B cell (primary cell): ENCODE measurements at regions of chr11 and their contacts with region 1.

Region 1: GRCh38 chr11:67439321-67439883 is 1.9 kb upstream of the PTPRCAP start:
- DNase-seq: peak; percentile 50
- ATAC-seq: no peak
- H3K4me3 ChIP-seq: peak overlapping the region in 2 of 5 experiments; percentile 92 to 96
- H3K4me3 Mint-ChIP-seq: peak overlapping the region; percentile 88
- H3K27ac ChIP-seq: peak overlapping the region; percentile 22 to 88
- H3K27ac Mint-ChIP-seq: peak overlapping the region; percentile 92
- H3K4me1 ChIP-seq: peaks cover 68 to 85% of the 10 kb centered on the region in 2 donors
- H3K4me1 Mint-ChIP-seq: peaks cover 82% of the 10 kb centered on the region
- H3K27me3 ChIP-seq: no peaks in the 10 kb centered on the region
- H3K27me3 Mint-ChIP-seq: no peaks in the 10 kb centered on the region
- CTCF ChIP-seq: no peak

Region 2: GRCh38 chr11:67053896-67054842 is 385.2 kb before region 1 on chr11:
- CTCF ChIA-PET with region 1: no interaction called
- POLR2A ChIA-PET with region 1: no interaction called
- intact Hi-C with region 1: no loop called
- DNase-seq: peak; percentile 55
- ATAC-seq: no peak
- H3K4me3 ChIP-seq: no peak overlapping the region
- H3K4me3 Mint-ChIP-seq: no peak overlapping the region
- H3K27ac ChIP-seq: no peak overlapping the region
- H3K27ac Mint-ChIP-seq: no peak overlapping the region
- H3K4me1 ChIP-seq: peaks cover 9% of the 10 kb centered on the region in 2 donors
- H3K4me1 Mint-ChIP-seq: peaks cover 13% of the 10 kb centered on the region
- H3K27me3 ChIP-seq: peaks cover 0 to 37% (median 13%) of the 10 kb centered on the region in 4 experiments
- H3K27me3 Mint-ChIP-seq: peaks cover 26% of the 10 kb centered on the region
- CTCF ChIP-seq: peak; percentile 55

Region 3: DNA sequence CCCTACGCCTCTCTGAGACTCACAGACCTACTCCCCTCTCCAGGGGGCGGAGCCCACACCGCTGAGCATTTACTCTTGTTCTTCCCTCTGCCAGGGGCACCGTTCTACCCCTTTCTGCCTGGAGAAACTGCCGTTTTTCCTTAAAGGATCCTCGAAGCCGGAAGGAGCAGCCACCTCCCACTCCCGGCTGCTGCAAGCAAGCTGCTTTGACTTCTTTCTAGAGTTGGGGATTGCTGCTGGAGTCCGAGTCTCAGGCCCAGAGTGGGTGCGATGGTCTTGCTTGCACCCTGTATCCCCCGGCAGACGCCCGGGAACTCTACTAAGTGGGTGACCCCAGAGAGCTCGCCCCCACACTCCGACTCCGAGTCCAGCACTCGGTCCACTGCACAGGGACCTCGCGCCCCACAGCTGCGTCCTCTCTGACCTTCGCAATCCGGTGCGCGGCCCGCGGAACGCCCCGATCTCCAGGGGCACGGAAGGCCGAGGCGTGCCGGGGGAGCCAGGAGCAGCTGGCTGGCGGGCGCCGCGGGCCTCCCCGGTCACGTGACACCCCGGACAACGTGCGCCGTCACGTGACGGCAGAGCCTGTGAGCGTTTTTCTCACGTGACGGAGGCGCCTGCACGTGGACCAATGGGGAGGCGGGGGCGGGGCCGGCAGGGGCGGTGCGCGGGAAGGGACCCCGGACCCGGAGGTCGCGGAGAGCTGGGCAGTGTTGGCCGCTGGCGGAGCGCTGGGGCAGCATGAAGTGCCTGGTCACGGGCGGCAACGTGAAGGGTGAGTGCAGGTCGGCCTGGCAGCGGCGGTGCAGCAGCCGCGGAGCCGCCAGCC is 47.9 kb before region 1 on chr11 and contains the start of gene RAD9A:
- CTCF ChIA-PET with region 1: no interaction called
- POLR2A ChIA-PET with region 1: interaction called, 20 read pairs
- intact Hi-C with region 1: no loop called
- DNase-seq: peak; percentile 96
- ATAC-seq: peak; percentile 83
- H3K4me3 ChIP-seq: peak within 1 kb of the TSS; percentile 63 to 95 (median 81)
- H3K4me3 Mint-ChIP-seq: peak within 1 kb of the TSS; percentile 91
- H3K27ac ChIP-seq: peak within 1 kb of the TSS; percentile 33 to 78
- H3K27ac Mint-ChIP-seq: peak within 1 kb of the TSS; percentile 69
- H3K4me1 ChIP-seq: peaks cover 10 to 29% of the 10 kb centered on the region in 2 donors
- H3K4me1 Mint-ChIP-seq: peaks cover 36% of the 10 kb centered on the region
- H3K27me3 ChIP-seq: no peaks in the 10 kb centered on the region
- H3K27me3 Mint-ChIP-seq: no peaks in the 10 kb centered on the region
- CTCF ChIP-seq: no peak
- total RNA-seq, gene RAD9A: 48.3 and 50.6 TPM in 2 replicates

Region 4: GRCh38 chr11:67420646-67421420 is 18.6 kb before region 1 on chr11:
- CTCF ChIA-PET with region 1: interaction called, 20 read pairs
- POLR2A ChIA-PET with region 1: interaction called, 98 read pairs
- intact Hi-C with region 1: loop called (anchors 2 kb)
- DNase-seq: peak; percentile 98
- ATAC-seq: peak; percentile 85
- H3K4me3 ChIP-seq: peak overlapping the region in 4 of 5 experiments; percentile 32 to 63 (median 53)
- H3K4me3 Mint-ChIP-seq: peak overlapping the region; percentile 83
- H3K27ac ChIP-seq: peak overlapping the region; percentile 43 to 71
- H3K27ac Mint-ChIP-seq: peak overlapping the region; percentile 91
- H3K4me1 ChIP-seq: peaks cover 49 to 54% of the 10 kb centered on the region in 2 donors
- H3K4me1 Mint-ChIP-seq: peaks cover 50% of the 10 kb centered on the region
- H3K27me3 ChIP-seq: no peaks in the 10 kb centered on the region
- H3K27me3 Mint-ChIP-seq: no peaks in the 10 kb centered on the region
- CTCF ChIP-seq: no peak

Region 5: GRCh38 chr11:67456068-67456705 is 16.8 kb after region 1 on chr11:
- CTCF ChIA-PET with region 1: interaction called, 43 read pairs
- POLR2A ChIA-PET with region 1: interaction called, 110 read pairs
- intact Hi-C with region 1: loop called (anchors 1 kb)
- DNase-seq: no peak
- ATAC-seq: no peak
- H3K4me3 ChIP-seq: no peak overlapping the region
- H3K4me3 Mint-ChIP-seq: no peak overlapping the region
- H3K27ac ChIP-seq: no peak overlapping the region
- H3K27ac Mint-ChIP-seq: peak overlapping the region; percentile 92
- H3K4me1 ChIP-seq: peaks cover 48 to 88% of the 10 kb centered on the region in 2 donors
- H3K4me1 Mint-ChIP-seq: peaks cover 44% of the 10 kb centered on the region
- H3K27me3 ChIP-seq: no peaks in the 10 kb centered on the region
- H3K27me3 Mint-ChIP-seq: no peaks in the 10 kb centered on the region
- CTCF ChIP-seq: no peak

Region 6: GRCh38 chr11:67482825-67483798 is 43.7 kb after region 1 on chr11 and contains the start of gene AIP:
- CTCF ChIA-PET with region 1: interaction called, 7 read pairs
- POLR2A ChIA-PET with region 1: interaction called, 53 read pairs
- intact Hi-C with region 1: loop called (anchors 2 kb)
- DNase-seq: peak; percentile 98
- ATAC-seq: peak; percentile 87
- H3K4me3 ChIP-seq: peak within 1 kb of the TSS; percentile 56 to 99 (median 68)
- H3K4me3 Mint-ChIP-seq: peak within 1 kb of the TSS; percentile 99
- H3K27ac ChIP-seq: peak within 1 kb of the TSS; percentile 75 to 79
- H3K27ac Mint-ChIP-seq: peak within 1 kb of the TSS; percentile 100
- H3K4me1 ChIP-seq: peaks cover 38 to 56% of the 10 kb centered on the region in 2 donors
- H3K4me1 Mint-ChIP-seq: peaks cover 56% of the 10 kb centered on the region
- H3K27me3 ChIP-seq: no peaks in the 10 kb centered on the region
- H3K27me3 Mint-ChIP-seq: no peaks in the 10 kb centered on the region
- CTCF ChIP-seq: no peak
- total RNA-seq, gene AIP: 120 and 127 TPM in 2 replicates

Region 7: GRCh38 chr11:67563354-67564114 is 124.1 kb after region 1 on chr11:
- CTCF ChIA-PET with region 1: no interaction called
- POLR2A ChIA-PET with region 1: interaction called, 12 read pairs
- intact Hi-C with region 1: no loop called
- DNase-seq: no peak
- ATAC-seq: no peak
- H3K4me3 ChIP-seq: no peak overlapping the region
- H3K4me3 Mint-ChIP-seq: no peak overlapping the region
- H3K27ac ChIP-seq: no peak overlapping the region
- H3K27ac Mint-ChIP-seq: no peak overlapping the region
- H3K4me1 ChIP-seq: peaks cover 9 to 17% of the 10 kb centered on the region in 2 donors
- H3K4me1 Mint-ChIP-seq: peaks cover 14% of the 10 kb centered on the region
- H3K27me3 ChIP-seq: peaks cover 0 to 4% (median 0%) of the 10 kb centered on the region in 4 experiments
- H3K27me3 Mint-ChIP-seq: no peaks in the 10 kb centered on the region
- CTCF ChIP-seq: no peak